SK-N-SH (cell line): ENCODE measurements at regions of chr2 and their contacts with region 1.

Region 1: DNA sequence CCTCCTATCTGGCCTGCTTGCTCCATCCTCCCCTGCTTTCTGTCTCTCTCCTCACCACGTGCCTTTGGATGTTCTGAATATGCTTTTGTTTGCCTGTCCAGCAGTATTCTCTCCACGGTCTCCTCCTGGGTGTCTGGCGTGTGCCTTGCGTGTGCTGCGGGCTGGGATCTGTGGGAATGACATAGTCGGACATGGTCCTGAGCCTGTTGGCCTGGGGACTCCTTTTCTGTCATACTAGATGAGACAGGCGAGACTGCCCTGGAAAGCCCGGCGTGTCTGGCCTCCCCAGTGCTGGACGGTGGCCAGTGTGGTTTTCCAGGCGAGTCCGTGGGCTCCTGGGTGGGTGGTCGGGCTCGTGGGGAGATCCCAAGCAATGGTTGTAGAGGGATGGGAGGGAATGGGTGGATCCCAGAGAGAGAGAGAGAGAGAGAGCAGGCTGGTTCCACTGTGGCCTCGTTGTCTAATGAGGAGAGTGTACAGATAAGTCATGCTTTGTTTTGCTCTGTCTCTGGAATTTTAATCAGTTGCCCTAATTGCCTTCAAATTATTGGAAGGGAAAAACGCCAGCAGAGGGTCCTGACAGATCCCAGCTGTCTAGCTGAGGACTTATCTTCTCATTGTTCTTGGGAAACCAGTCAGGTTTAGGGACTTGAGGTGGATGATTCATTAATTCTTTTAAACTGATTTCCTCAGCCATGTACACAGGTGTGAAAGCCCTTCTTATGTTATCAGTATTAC is 58.3 kb downstream of the HPCAL1 start:
- DNase-seq: peak; percentile 81
- H3K4me3 ChIP-seq: no peak overlapping the region
- H3K27ac ChIP-seq: peak overlapping the region in 1 of 2 experiments; percentile 69; a peak in 2 of 4 replicates
- H3K4me1 ChIP-seq: peaks cover 10 to 75% of the 10 kb centered on the region in 2 experiments; a peak in 2 of 4 replicates
- H3K27me3 ChIP-seq: no peaks in the 10 kb centered on the region
- CTCF ChIP-seq: no peak
- EP300 ChIP-seq: peak in 1 of 2 experiments; percentile 44; a peak in 1 of 4 replicates
- RAD21 ChIP-seq: no peak

Region 2: DNA sequence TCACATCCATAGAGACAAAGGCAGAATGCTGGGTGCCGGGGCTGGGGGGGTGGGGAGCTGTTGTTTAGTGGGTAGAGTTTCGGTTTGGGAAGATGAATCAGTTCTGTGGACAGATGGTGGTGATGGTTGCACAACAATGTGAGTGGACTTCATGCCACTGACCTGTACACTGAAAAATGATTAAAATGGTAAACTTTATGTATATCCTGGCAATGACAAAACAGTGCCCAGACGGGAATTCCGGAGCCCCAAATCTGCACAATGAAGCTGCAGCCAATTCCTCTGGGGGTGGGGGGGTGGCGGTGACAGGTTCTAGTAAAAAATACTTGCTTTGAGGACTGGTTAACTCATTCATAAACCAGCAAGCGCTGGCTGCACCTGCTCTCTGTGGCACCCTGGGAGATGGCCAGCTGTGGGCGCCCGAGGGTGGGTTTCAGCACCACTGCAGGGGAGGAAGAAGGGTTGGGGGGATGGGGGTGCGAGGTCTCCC is 140.1 kb before region 1 on chr2:
- CTCF ChIA-PET with region 1: no interaction called
- POLR2A ChIA-PET with region 1: no interaction called
- DNase-seq: peak; percentile 48
- H3K4me3 ChIP-seq: no peak overlapping the region
- H3K27ac ChIP-seq: no peak overlapping the region
- H3K4me1 ChIP-seq: peaks cover 0 to 11% of the 10 kb centered on the region in 2 experiments; a peak in 1 of 4 replicates
- H3K27me3 ChIP-seq: no peaks in the 10 kb centered on the region
- CTCF ChIP-seq: no peak
- EP300 ChIP-seq: no peak
- RAD21 ChIP-seq: no peak

Region 3: DNA sequence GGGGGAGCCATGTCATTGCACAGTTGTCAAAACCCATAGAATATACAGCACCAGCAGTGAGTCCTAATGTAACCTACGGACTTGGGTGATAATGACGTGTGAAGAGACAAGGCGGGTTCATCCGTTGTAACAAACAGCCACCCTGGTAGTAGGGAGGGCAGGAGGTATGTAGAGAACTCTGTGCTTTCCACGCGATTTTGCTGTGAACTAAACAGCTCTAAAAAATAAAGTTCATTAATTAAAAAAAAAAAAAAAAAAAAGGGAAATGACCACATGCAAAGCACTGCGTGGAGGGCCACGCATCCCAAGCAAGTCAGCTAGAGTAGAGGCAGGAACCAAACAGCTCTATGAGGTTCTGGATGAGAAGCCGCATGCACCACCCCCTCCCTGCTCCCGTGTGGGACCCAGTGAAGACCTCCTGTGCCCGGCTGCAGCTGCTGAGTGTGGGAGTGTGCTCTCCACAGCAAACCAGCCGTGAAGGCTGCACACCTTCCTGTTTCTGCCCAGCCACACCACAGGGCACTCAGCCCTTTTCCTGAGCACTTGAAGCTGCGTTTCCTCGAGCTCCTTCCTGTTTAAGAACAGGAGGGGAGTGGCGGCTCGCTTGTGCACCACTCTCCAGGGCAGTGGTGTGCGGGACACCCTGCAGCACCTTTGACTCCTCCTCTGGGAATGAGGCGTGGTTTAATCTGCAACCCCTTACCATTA is 21.5 kb after region 1 on chr2:
- CTCF ChIA-PET with region 1: interaction called, 14 read pairs
- POLR2A ChIA-PET with region 1: no interaction called
- DNase-seq: no peak
- H3K4me3 ChIP-seq: no peak overlapping the region
- H3K27ac ChIP-seq: peak overlapping the region in 1 of 2 experiments; percentile 1; a peak in 1 of 4 replicates
- H3K4me1 ChIP-seq: peaks cover 7 to 70% of the 10 kb centered on the region in 2 experiments; a peak in 2 of 4 replicates
- H3K27me3 ChIP-seq: no peaks in the 10 kb centered on the region
- CTCF ChIP-seq: no peak
- EP300 ChIP-seq: no peak
- RAD21 ChIP-seq: no peak

Region 4: GRCh38 chr2:10477443-10478297 is 116.7 kb after region 1 on chr2:
- CTCF ChIA-PET with region 1: no interaction called
- POLR2A ChIA-PET with region 1: no interaction called
- DNase-seq: no peak
- H3K4me3 ChIP-seq: no peak overlapping the region
- H3K27ac ChIP-seq: no peak overlapping the region
- H3K4me1 ChIP-seq: no peaks in the 10 kb centered on the region
- H3K27me3 ChIP-seq: peaks cover 16% of the 10 kb centered on the region; the same call in 1 of the 2 replicates
- CTCF ChIP-seq: no peak
- EP300 ChIP-seq: no peak
- RAD21 ChIP-seq: no peak